IMR-90 (cell line): ENCODE measurements at regions of chr20 and their contacts with region 1.

Region 1: DNA sequence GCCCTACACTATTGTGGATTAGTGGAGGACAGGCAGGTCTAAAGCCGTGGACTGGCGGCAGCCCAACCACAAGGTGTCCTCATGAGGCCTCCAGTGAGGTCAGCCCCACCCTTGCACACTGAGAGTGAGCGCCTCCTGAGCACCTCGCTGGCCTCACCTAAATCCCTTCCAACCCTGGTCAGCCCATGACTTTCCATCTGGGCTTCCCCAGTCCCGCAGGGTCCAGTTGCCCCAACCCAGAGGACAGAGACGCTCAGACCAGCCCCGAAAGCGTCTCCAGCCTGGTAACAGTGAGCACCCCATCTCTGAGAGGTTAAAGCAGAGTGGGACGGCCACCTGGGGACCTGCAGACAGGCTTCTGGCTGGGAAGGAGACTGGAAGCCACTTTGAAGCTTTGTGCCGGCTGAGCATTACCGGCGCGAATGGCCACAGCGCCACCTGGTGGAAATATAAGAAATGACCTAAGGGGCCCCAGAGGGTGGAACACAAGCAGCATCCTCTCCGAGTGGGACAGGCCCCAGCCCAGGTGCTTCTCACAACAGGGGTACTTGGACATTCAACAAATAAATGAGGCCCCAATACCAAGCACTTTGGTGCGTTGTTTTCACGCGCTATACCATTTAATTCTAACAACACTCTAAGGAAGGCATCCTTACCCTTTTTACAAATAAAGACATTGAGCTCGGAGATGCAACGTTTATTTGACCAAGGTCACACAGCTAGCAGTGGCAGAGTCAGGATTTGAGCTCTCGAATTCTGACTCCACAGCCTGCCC is 65.7 kb upstream of the TOP1 start:
- DNase-seq: peak; percentile 44
- ATAC-seq: peak; percentile 89
- H3K4me3 ChIP-seq: no peak overlapping the region
- H3K27ac ChIP-seq: no peak overlapping the region
- H3K4me1 ChIP-seq: no peaks in the 10 kb centered on the region; the same call in 1 of the 2 replicates
- H3K27me3 ChIP-seq: no peaks in the 10 kb centered on the region
- CTCF ChIP-seq: peak; percentile 88
- POLR2A ChIP-seq: 0 out of 2 replicates have a peak, but pooled peaks have one; percentile 41
- RAD21 ChIP-seq: peak; percentile 90

Region 2: GRCh38 chr20:39112178-39112743 is 1850.7 kb before region 1 on chr20:
- CTCF ChIA-PET with region 1: interaction called, 3 read pairs
- POLR2A ChIA-PET with region 1: no interaction called
- dilution Hi-C with region 1: no loop called
- in situ Hi-C with region 1: no loop called
- intact Hi-C with region 1: loop called (anchors 5 kb)
- DNase-seq: peak; percentile 28
- ATAC-seq: peak; percentile 96
- H3K4me3 ChIP-seq: no peak overlapping the region
- H3K27ac ChIP-seq: no peak overlapping the region
- H3K4me1 ChIP-seq: no peaks in the 10 kb centered on the region
- H3K27me3 ChIP-seq: peaks cover 8% of the 10 kb centered on the region
- CTCF ChIP-seq: peak; percentile 52
- POLR2A ChIP-seq: no peak
- RAD21 ChIP-seq: peak; percentile 62

Region 3: DNA sequence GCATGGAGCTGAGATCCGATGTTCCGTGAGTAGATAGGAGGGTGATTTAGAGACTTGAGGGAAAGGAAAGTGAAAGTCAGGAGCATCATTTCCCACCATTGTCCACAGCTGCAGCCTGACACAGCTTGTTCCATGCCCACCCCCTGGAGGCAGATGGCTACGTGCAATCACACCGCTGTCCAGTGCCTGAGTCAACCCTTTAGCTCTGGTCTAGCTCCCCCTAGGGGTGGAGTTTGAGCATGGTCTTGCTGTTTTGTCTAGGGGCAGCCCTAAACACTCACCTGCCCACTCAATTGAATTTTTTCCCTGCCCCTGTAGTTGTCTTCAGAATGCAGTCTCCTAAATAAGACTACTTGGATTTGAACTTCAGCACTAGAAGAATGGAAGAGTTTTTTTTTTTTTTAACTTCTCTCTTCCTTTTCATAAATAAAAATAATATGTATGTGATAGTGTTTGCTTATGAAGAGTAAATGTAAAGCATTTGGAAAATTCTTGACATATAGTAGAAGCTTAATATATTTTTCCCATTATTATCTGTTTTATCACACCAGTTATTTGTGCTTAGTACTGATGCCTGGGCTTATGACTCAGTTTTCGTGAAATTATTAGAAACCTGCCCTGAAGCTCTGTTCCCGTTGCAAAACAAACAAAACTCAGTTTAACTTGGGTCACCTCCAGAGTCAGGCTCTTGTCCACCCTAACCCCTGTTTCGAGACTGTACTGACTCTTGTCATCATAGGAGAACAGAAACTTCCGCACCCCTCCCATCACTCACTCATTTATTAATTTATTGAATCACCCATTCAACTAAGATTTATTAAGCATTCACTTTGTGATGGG is 1088.6 kb before region 1 on chr20:
- CTCF ChIA-PET with region 1: no interaction called
- POLR2A ChIA-PET with region 1: no interaction called
- dilution Hi-C with region 1: no loop called
- in situ Hi-C with region 1: loop called (anchors 25 kb)
- intact Hi-C with region 1: no loop called
- DNase-seq: peak; percentile 89
- ATAC-seq: peak; percentile 93
- H3K4me3 ChIP-seq: no peak overlapping the region
- H3K27ac ChIP-seq: no peak overlapping the region
- H3K4me1 ChIP-seq: no peaks in the 10 kb centered on the region
- H3K27me3 ChIP-seq: 0 out of 2 replicates have a peak, but pooled peaks cover 3% of the 10 kb centered on the region
- CTCF ChIP-seq: peak; percentile 95
- POLR2A ChIP-seq: no peak
- RAD21 ChIP-seq: peak; percentile 91

Region 4: GRCh38 chr20:40689943-40690835 is 272.7 kb before region 1 on chr20:
- CTCF ChIA-PET with region 1: interaction called, 3 read pairs
- POLR2A ChIA-PET with region 1: no interaction called
- dilution Hi-C with region 1: no loop called
- in situ Hi-C with region 1: no loop called
- intact Hi-C with region 1: loop called (anchors 5 kb)
- DNase-seq: peak; percentile 79
- ATAC-seq: peak; percentile 63
- H3K4me3 ChIP-seq: peak overlapping the region; percentile 46
- H3K27ac ChIP-seq: peak overlapping the region; percentile 36; the same call in 1 of the 2 replicates
- H3K4me1 ChIP-seq: peaks cover 7% of the 10 kb centered on the region; the same call in 1 of the 2 replicates
- H3K27me3 ChIP-seq: peaks cover 75% of the 10 kb centered on the region
- CTCF ChIP-seq: peak; percentile 83
- POLR2A ChIP-seq: no peak
- RAD21 ChIP-seq: peak; percentile 79

Region 5: DNA sequence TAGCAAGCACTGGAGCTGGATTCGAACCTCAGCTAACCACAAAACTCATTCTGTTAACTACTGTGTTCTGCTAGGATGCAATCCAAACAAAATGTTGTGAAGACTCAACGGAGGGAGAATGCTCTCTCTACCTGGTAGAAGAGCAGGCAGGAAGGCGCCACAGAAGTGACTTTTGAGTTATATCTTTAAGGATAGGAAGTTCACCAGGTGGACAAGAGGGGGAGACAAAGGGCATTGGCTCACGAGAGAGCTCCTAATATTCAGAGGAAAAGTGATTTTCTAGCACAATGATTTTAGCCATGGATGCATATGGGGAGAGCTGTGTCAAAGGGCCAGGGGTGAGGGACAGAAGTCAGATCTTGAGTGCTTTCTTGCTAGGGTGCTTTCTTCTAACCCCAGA is 165.5 kb before region 1 on chr20:
- CTCF ChIA-PET with region 1: no interaction called
- POLR2A ChIA-PET with region 1: no interaction called
- dilution Hi-C with region 1: no loop called
- in situ Hi-C with region 1: no loop called
- intact Hi-C with region 1: loop called (anchors 1 kb)
- DNase-seq: peak; percentile 17
- ATAC-seq: peak; percentile 40; the same call in 1 of the 2 replicates
- H3K4me3 ChIP-seq: no peak overlapping the region
- H3K27ac ChIP-seq: no peak overlapping the region
- H3K4me1 ChIP-seq: no peaks in the 10 kb centered on the region
- H3K27me3 ChIP-seq: no peaks in the 10 kb centered on the region
- CTCF ChIP-seq: peak; percentile 51
- POLR2A ChIP-seq: no peak
- RAD21 ChIP-seq: peak; percentile 38

Region 6: DNA sequence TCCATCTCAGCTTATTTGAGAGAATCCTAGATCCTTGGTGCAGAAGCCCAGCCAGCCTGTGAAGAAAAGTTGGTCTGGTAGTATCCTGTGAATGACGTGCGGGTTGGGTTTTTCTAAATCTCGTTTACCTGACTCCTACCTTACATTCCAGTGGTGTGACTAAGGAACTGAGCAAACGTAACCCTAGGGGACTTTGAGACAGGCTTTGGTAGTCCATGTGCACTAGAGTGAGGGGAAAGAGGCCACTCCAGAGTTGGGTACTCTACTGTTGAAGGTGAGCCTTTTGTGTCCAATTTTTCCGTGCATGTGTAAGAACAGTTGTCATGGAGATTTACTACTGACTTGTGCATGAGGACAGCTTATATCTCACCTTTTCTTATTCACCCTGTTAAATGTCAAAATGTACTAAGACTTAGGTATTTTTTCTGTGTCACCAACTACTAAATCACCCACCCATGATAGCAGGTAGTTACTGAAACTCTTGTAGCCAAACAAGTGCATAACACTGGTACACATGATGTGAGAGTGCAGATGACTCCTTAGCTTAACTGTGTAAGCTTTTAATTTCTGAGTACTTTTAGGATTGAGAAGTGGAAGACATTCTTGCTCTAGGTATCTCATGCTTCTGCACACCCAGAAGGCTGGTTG is 148.1 kb after region 1 on chr20:
- CTCF ChIA-PET with region 1: no interaction called
- POLR2A ChIA-PET with region 1: no interaction called
- dilution Hi-C with region 1: no loop called
- in situ Hi-C with region 1: no loop called
- intact Hi-C with region 1: no loop called
- DNase-seq: no peak
- ATAC-seq: no peak
- H3K4me3 ChIP-seq: no peak overlapping the region
- H3K27ac ChIP-seq: no peak overlapping the region
- H3K4me1 ChIP-seq: no peaks in the 10 kb centered on the region
- H3K27me3 ChIP-seq: no peaks in the 10 kb centered on the region
- CTCF ChIP-seq: no peak
- POLR2A ChIP-seq: no peak
- RAD21 ChIP-seq: no peak

Region 7: GRCh38 chr20:41232973-41233926 is 270.3 kb after region 1 on chr20:
- CTCF ChIA-PET with region 1: no interaction called
- POLR2A ChIA-PET with region 1: no interaction called
- dilution Hi-C with region 1: no loop called
- in situ Hi-C with region 1: no loop called
- intact Hi-C with region 1: loop called (anchors 5 kb)
- DNase-seq: peak; percentile 96
- ATAC-seq: peak; percentile 64
- H3K4me3 ChIP-seq: no peak overlapping the region
- H3K27ac ChIP-seq: peak overlapping the region; percentile 22; the same call in 1 of the 2 replicates
- H3K4me1 ChIP-seq: peaks cover 12% of the 10 kb centered on the region
- H3K27me3 ChIP-seq: no peaks in the 10 kb centered on the region
- CTCF ChIP-seq: no peak
- POLR2A ChIP-seq: no peak
- RAD21 ChIP-seq: no peak